Calu3 (cell line): ENCODE measurements at regions of chr2 and their contacts with region 1.

Region 1: DNA sequence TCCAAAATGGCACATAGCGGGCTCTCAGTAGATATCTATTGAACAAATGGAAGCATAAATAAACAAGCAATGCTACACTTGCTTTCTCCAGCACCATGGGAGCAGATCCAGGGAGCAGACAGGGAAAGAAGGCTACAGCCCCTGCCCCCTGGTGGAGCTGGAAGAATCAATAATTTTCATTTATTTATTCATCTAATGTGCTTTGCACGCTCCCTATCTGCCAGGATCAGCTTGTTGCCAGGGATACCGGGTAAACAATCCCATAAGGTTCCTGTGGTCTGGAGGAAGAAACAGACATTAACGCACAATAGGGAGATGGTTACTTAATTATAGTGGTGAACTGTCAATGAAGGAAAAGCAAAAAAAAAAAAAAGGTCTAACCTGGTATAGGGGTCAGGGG is 40.1 kb upstream of the CLASP1 start:
- DNase-seq: peak; percentile 76
- H3K4me3 Mint-ChIP-seq: no peak overlapping the region
- H3K27ac Mint-ChIP-seq: peak overlapping the region; percentile 96
- H3K4me1 Mint-ChIP-seq: peaks cover 32% of the 10 kb centered on the region
- H3K27me3 Mint-ChIP-seq: no peaks in the 10 kb centered on the region
- CTCF ChIP-seq: peak; percentile 44

Region 2: GRCh38 chr2:121561617-121562268 is 127.6 kb before region 1 on chr2:
- CTCF ChIA-PET with region 1: no interaction called
- intact Hi-C with region 1: no loop called
- DNase-seq: no peak
- H3K4me3 Mint-ChIP-seq: no peak overlapping the region
- H3K27ac Mint-ChIP-seq: no peak overlapping the region
- H3K4me1 Mint-ChIP-seq: peaks cover 26% of the 10 kb centered on the region
- H3K27me3 Mint-ChIP-seq: no peaks in the 10 kb centered on the region
- CTCF ChIP-seq: no peak

Region 3: GRCh38 chr2:121699421-121700333 is 10.3 kb after region 1 on chr2:
- CTCF ChIA-PET with region 1: interaction called, 17 read pairs
- intact Hi-C with region 1: no loop called
- DNase-seq: peak; percentile 88
- H3K4me3 Mint-ChIP-seq: peak overlapping the region; percentile 65
- H3K27ac Mint-ChIP-seq: peak overlapping the region; percentile 90
- H3K4me1 Mint-ChIP-seq: peaks cover 66% of the 10 kb centered on the region
- H3K27me3 Mint-ChIP-seq: no peaks in the 10 kb centered on the region
- CTCF ChIP-seq: no peak